ENCODE measurements at regions of chr13 and their contacts with region 1.

Region 1: DNA sequence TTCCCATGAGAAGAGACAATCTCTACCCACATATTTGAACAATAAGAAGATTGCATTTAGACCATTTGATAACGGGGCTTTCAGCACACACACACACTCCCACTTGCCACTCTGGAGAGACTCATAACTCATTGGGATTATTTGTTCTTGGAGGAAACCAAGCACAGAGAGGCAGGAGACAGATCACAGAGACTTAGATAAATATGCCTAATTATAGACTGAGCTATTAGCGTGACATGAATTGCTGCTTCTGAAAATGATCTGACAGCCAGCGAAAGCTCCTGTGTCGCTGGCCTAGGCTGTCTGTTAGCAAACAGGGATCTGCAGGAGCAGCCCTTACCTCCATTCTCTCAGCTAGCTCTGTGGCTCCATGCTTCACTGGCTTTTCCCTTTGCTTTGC is 111.4 kb downstream of the CCNA1 start:
- DNase-seq: no peak
- ATAC-seq: no peak
- H3K4me3 ChIP-seq: no peak overlapping the region
- H3K4me3 Mint-ChIP-seq: no peak overlapping the region
- H3K27ac ChIP-seq: no peak overlapping the region
- H3K27ac Mint-ChIP-seq: no peak overlapping the region
- H3K4me1 ChIP-seq: no peaks in the 10 kb centered on the region
- H3K4me1 Mint-ChIP-seq: no peaks in the 10 kb centered on the region
- H3K27me3 ChIP-seq: no peaks in the 10 kb centered on the region
- H3K27me3 Mint-ChIP-seq: peaks cover 0 to 16% (median 9%) of the 10 kb centered on the region in 5 donors

Region 2: GRCh38 chr13:34863360-34864135 is 1680.1 kb before region 1 on chr13:
- CTCF ChIA-PET with region 1: no interaction called
- POLR2A ChIA-PET with region 1: no interaction called
- intact Hi-C with region 1: no loop called
- DNase-seq: no peak
- ATAC-seq: no peak
- H3K4me3 ChIP-seq: no peak overlapping the region
- H3K4me3 Mint-ChIP-seq: no peak overlapping the region
- H3K27ac ChIP-seq: no peak overlapping the region
- H3K27ac Mint-ChIP-seq: no peak overlapping the region
- H3K4me1 ChIP-seq: no peaks in the 10 kb centered on the region
- H3K4me1 Mint-ChIP-seq: no peaks in the 10 kb centered on the region
- H3K27me3 ChIP-seq: no peaks in the 10 kb centered on the region
- H3K27me3 Mint-ChIP-seq: peaks cover 0 to 10% (median 3%) of the 10 kb centered on the region in 5 donors

Region 3: GRCh38 chr13:36493046-36493445 is 50.6 kb before region 1 on chr13:
- CTCF ChIA-PET with region 1: no interaction called
- POLR2A ChIA-PET with region 1: no interaction called
- intact Hi-C with region 1: loop called in 1 of 2 experiments (anchors 5 kb)
- DNase-seq: no peak
- ATAC-seq: no peak
- H3K4me3 ChIP-seq: no peak overlapping the region
- H3K4me3 Mint-ChIP-seq: no peak overlapping the region
- H3K27ac ChIP-seq: no peak overlapping the region
- H3K27ac Mint-ChIP-seq: no peak overlapping the region
- H3K4me1 ChIP-seq: no peaks in the 10 kb centered on the region
- H3K4me1 Mint-ChIP-seq: no peaks in the 10 kb centered on the region
- H3K27me3 ChIP-seq: no peaks in the 10 kb centered on the region
- H3K27me3 Mint-ChIP-seq: peaks cover 0 to 17% (median 15%) of the 10 kb centered on the region in 5 donors

Region 4: DNA sequence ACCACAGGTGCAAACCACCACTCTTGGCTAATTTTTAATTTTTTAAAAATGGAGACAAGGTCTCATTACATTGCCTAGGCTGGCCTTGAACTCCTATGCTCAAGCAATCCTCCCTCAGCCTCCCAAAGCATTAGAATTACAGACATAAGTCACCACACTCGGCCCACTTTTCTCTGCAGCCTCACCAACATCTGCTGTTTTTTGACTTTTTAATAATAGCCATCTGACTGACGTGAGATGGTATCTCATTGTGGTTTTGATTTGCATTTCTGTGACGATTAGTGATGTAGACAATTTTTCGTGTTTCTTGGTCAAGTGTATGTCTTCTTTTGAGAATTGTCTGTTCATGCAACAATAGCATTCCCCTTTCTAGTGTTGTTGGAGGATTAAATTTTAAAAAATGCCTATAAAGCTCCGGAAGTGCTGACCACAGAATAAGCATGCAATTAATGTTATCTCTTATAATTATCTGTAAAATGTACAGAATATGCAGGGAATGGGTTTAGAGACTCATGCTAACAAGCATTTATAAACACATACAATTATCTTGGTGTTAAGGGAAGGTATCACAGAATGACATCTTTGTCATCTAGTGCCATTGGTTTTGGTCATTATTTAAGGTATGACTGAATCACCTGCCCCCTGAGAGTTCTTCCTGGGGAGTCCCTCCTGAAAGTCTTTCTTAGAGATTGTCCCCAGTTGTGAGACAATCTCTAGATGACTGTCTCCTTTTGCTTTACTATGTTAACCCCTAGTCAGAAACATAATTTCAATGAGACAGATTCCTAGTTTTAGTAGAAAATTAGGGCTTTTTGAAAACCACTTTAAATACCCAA is 11.7 kb after region 1 on chr13:
- CTCF ChIA-PET with region 1: no interaction called
- POLR2A ChIA-PET with region 1: no interaction called
- intact Hi-C with region 1: no loop called
- DNase-seq: no peak
- ATAC-seq: no peak
- H3K4me3 ChIP-seq: no peak overlapping the region
- H3K4me3 Mint-ChIP-seq: no peak overlapping the region
- H3K27ac ChIP-seq: no peak overlapping the region
- H3K27ac Mint-ChIP-seq: no peak overlapping the region
- H3K4me1 ChIP-seq: no peaks in the 10 kb centered on the region
- H3K4me1 Mint-ChIP-seq: no peaks in the 10 kb centered on the region
- H3K27me3 ChIP-seq: no peaks in the 10 kb centered on the region
- H3K27me3 Mint-ChIP-seq: peaks cover 0 to 15% (median 0%) of the 10 kb centered on the region in 5 donors

Region 5: DNA sequence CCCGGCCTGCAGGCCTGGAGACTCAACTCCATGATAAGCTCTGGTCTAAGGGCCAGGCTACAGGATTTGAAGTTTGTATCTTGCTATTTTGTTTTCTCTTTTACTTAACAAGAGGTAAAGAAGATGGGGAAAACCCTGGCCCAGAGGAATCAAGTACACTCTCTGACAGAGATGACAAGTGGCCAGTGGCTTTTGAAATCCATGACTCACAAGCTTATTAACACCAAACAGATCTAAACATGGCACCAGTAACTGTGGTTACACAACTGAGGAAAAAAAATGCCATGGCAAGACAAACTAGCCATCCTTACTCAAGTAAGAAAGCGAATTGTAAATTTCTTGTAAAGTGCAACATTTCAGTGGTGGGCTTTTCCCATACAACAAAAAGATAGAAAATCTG is 57.5 kb after region 1 on chr13:
- CTCF ChIA-PET with region 1: no interaction called
- POLR2A ChIA-PET with region 1: no interaction called
- intact Hi-C with region 1: no loop called
- DNase-seq: no peak
- ATAC-seq: no peak
- H3K4me3 ChIP-seq: no peak overlapping the region
- H3K4me3 Mint-ChIP-seq: no peak overlapping the region
- H3K27ac ChIP-seq: no peak overlapping the region
- H3K27ac Mint-ChIP-seq: no peak overlapping the region
- H3K4me1 ChIP-seq: no peaks in the 10 kb centered on the region
- H3K4me1 Mint-ChIP-seq: no peaks in the 10 kb centered on the region
- H3K27me3 ChIP-seq: no peaks in the 10 kb centered on the region
- H3K27me3 Mint-ChIP-seq: peaks cover 0 to 25% (median 7%) of the 10 kb centered on the region in 5 donors